Endothelial cell of umbilical vein (primary cell): ENCODE measurements at regions of chr18 and their contacts with region 1.

Region 1: GRCh38 chr18:33195795-33196194 is 244.7 kb downstream of the CCDC178 start:
- DNase-seq: no peak
- H3K4me3 ChIP-seq: no peak overlapping the region
- H3K27ac ChIP-seq: no peak overlapping the region
- H3K4me1 ChIP-seq: no peaks in the 10 kb centered on the region
- H3K27me3 ChIP-seq: no peaks in the 10 kb centered on the region
- CTCF ChIP-seq: no peak
- POLR2A ChIP-seq: no peak

Region 2: GRCh38 chr18:33210575-33211189 is 14.9 kb after region 1 on chr18:
- CTCF ChIA-PET with region 1: interaction called, 34 read pairs
- POLR2A ChIA-PET with region 1: no interaction called
- dilution Hi-C with region 1: no loop called
- intact Hi-C with region 1: no loop called
- DNase-seq: peak; percentile 36
- H3K4me3 ChIP-seq: no peak overlapping the region
- H3K27ac ChIP-seq: no peak overlapping the region
- H3K4me1 ChIP-seq: no peaks in the 10 kb centered on the region
- H3K27me3 ChIP-seq: no peaks in the 10 kb centered on the region
- CTCF ChIP-seq: peak; percentile 46 to 58
- POLR2A ChIP-seq: no peak